Ovary (tissue), 10 donors: ENCODE measurements at regions of chr5 and their contacts with region 1.

Region 1: GRCh38 chr5:175275097-175275496 is 168.9 kb downstream of the DRD1 start:
- DNase-seq: no peak
- H3K4me3 ChIP-seq: no peak overlapping the region
- H3K27ac ChIP-seq: no peak overlapping the region
- H3K4me1 ChIP-seq: no peaks in the 10 kb centered on the region
- H3K27me3 ChIP-seq: no peaks in the 10 kb centered on the region
- CTCF ChIP-seq: no peak
- EP300 ChIP-seq: no peak
- POLR2A ChIP-seq: no peak

Region 2: DNA sequence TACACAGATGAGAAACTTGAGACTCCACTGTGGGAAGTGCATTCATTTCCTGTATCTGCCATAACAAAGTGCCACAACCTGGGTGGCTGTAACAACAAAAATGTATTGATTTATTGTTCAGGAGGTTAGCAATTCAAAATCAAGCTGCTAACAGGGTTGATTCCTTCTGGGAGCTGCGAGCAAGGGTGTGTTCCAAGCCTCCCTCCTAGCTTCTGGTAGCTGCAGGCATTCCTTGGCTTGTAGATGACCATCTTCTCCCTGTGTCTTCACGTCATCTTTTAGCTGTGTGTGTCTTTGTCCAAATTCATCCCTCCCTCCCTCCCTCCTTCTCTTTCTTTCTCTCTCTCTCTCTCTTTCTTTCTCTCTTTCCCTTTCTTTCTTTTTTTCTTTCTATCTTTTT is 292.6 kb before region 1 on chr5:
- intact Hi-C with region 1: no loop called
- DNase-seq: no peak
- H3K4me3 ChIP-seq: no peak overlapping the region
- H3K27ac ChIP-seq: no peak overlapping the region
- H3K4me1 ChIP-seq: no peaks in the 10 kb centered on the region
- H3K27me3 ChIP-seq: no peaks in the 10 kb centered on the region
- CTCF ChIP-seq: no peak
- EP300 ChIP-seq: no peak
- POLR2A ChIP-seq: no peak

Region 3: DNA sequence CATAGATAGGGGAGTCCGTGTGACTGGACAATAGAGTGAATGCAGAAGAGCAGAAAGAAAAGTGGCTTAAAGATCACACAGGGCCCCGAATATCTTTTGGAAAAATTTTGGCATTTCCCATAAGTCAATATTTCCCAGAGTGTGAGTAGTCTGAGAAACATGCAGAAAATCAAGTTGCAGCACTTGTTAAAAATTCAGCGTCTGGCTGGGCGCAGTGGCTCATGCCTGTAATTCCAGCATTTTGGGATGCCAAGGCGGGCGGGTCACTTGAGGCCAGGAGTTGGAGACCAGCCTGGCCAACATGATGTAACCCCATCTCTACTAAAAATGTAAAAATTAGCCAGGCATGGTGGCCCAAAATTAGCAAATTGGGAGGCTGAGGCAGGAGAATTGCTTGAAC is 58.1 kb before region 1 on chr5:
- intact Hi-C with region 1: no loop called
- DNase-seq: no peak
- H3K4me3 ChIP-seq: no peak overlapping the region
- H3K27ac ChIP-seq: no peak overlapping the region
- H3K4me1 ChIP-seq: no peaks in the 10 kb centered on the region
- H3K27me3 ChIP-seq: no peaks in the 10 kb centered on the region
- CTCF ChIP-seq: no peak
- EP300 ChIP-seq: no peak
- POLR2A ChIP-seq: no peak

Region 4: DNA sequence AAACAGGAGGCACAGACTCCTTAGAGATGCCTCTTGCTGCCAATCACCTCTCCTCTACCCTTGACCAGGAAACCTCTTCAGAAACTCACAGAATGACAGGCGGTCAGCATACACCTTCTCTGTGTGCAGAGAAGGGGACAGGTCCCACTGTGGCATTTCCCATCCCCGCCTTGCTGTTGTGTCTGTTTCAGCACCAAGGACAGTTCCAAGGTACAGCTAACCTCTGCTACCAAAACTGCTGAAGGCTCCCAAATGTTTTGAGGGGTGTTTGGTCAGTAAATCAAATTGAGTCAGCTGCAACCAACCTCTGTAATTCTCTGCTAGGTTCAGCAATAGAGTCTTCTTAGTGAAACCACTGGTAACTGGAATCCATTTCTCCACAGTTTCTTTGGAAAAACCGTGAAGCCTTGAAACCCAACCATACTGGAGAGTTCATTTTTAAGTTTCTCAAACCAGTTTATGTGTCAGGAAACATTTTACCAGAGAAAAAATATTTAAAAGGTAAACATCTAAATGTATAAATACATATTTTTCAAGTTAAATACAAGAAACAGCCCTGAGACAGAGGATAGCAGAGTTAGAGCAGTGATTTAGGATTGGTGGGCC is 46.9 kb after region 1 on chr5:
- intact Hi-C with region 1: loop called in 1 of 4 experiments (anchors 2 kb)
- DNase-seq: no peak
- H3K4me3 ChIP-seq: no peak overlapping the region
- H3K27ac ChIP-seq: no peak overlapping the region
- H3K4me1 ChIP-seq: no peaks in the 10 kb centered on the region
- H3K27me3 ChIP-seq: no peaks in the 10 kb centered on the region
- CTCF ChIP-seq: no peak
- EP300 ChIP-seq: no peak
- POLR2A ChIP-seq: no peak